Natural killer cell (primary cell): ENCODE measurements at regions of chr6 and their contacts with region 1.

Region 1: GRCh38 chr6:26383624-26384417 is 913 bp downstream of the BTN2A2 start:
- DNase-seq: peak; percentile 26 to 51
- ATAC-seq: peak in 1 of 3 donors; percentile 21
- H3K4me3 ChIP-seq: peak overlapping the region; percentile 77
- H3K4me3 Mint-ChIP-seq: peak overlapping the region; percentile 100
- H3K27ac ChIP-seq: peak overlapping the region; percentile 86
- H3K27ac Mint-ChIP-seq: peak overlapping the region; percentile 98 to 100
- H3K4me1 ChIP-seq: peaks cover 16% of the 10 kb centered on the region
- H3K4me1 Mint-ChIP-seq: peaks cover 32 to 58% of the 10 kb centered on the region in 2 donors
- H3K27me3 ChIP-seq: no peaks in the 10 kb centered on the region
- H3K27me3 Mint-ChIP-seq: no peaks in the 10 kb centered on the region
- CTCF ChIP-seq: no peak

Region 2: DNA sequence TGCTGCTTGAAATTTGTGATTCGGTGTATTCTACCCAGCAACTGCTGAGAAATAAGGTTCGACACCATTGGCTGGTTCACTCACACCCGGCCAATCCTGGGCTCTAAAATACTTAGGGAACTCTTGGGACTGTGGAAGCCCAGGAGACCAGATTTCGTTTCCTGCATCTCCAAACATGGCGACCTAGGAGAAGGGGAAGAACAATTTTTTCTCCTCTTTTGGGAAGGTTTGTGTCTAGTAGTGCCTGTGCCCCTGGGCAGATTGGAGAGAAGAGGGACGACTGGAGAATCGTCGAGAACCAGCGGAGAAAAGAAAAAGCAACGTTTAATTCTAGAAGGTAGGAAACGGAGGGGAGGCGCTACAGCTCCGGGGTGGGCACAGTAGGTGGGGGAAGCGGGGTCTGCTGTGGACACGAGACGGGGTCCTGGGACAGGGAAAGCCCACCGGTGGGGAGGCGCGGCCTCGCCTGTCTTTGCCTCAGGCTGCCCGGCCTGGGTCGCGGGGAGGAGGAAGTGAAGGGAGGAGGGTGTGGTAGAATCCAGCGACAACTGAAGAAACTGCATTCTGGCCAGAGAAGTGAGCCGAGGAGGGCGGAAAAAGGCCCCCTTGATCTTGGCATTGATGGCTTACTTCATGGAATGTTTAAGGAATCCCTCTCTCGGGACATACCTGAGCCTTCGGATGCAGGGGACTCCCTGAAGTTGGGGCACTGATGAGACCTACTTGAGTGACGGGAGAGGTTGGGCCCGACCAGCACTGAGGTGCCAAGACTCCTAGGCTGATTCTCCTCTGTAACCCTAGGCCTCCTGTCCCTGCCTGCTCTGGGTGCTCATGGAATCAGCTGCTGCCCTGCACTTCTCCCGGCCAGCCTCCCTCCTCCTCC is 74.2 kb after region 1 on chr6 and contains the start of gene BTN2A1:
- intact Hi-C with region 1: loop called (anchors 5 kb)
- DNase-seq: peak; percentile 54 to 92
- ATAC-seq: peak; percentile 97 to 98 (median 98)
- H3K4me3 ChIP-seq: peak within 1 kb of the TSS; percentile 93
- H3K4me3 Mint-ChIP-seq: peak within 1 kb of the TSS; percentile 100
- H3K27ac ChIP-seq: peak within 1 kb of the TSS; percentile 82
- H3K27ac Mint-ChIP-seq: peak within 1 kb of the TSS; percentile 95 to 97
- H3K4me1 ChIP-seq: peaks cover 35% of the 10 kb centered on the region
- H3K4me1 Mint-ChIP-seq: peaks cover 59 to 63% of the 10 kb centered on the region in 2 donors
- H3K27me3 ChIP-seq: no peaks in the 10 kb centered on the region
- H3K27me3 Mint-ChIP-seq: no peaks in the 10 kb centered on the region
- CTCF ChIP-seq: no peak
- total RNA-seq, gene BTN2A1: 33.8 to 51.2 (median 43.3) TPM